ENCODE measurements at regions of chr15 and their contacts with region 1.

Region 1: GRCh38 chr15:71443538-71443937 is 328.3 kb downstream of the THSD4 start:
- DNase-seq: no peak
- H3K4me3 ChIP-seq: no peak overlapping the region
- H3K27ac ChIP-seq: peak overlapping the region; percentile 7 to 23 (median 10)
- H3K4me1 ChIP-seq: peaks cover 18 to 68% (median 44%) of the 10 kb centered on the region in 3 donors
- H3K27me3 ChIP-seq: no peaks in the 10 kb centered on the region
- CTCF ChIP-seq: peak; percentile 82 to 96 (median 90)
- POLR2A ChIP-seq: no peak

Region 2: GRCh38 chr15:71114896-71115554 is 328.5 kb before region 1 on chr15 and contains the start of gene THSD4:
- intact Hi-C with region 1: loop called (anchors 5 kb)
- DNase-seq: no peak
- H3K4me3 ChIP-seq: peak within 1 kb of the TSS; percentile 52 to 72 (median 62)
- H3K27ac ChIP-seq: peak within 1 kb of the TSS; percentile 78 to 86 (median 80)
- H3K4me1 ChIP-seq: peaks cover 0 to 45% (median 8%) of the 10 kb centered on the region in 3 donors
- H3K27me3 ChIP-seq: peaks cover 0 to 18% (median 0%) of the 10 kb centered on the region in 4 donors
- CTCF ChIP-seq: peak; percentile 49 to 98 (median 96)
- POLR2A ChIP-seq: peak in 1 of 4 donors; percentile 13
- total RNA-seq, gene THSD4: 39.4 to 232 (median 127) TPM

Region 3: DNA sequence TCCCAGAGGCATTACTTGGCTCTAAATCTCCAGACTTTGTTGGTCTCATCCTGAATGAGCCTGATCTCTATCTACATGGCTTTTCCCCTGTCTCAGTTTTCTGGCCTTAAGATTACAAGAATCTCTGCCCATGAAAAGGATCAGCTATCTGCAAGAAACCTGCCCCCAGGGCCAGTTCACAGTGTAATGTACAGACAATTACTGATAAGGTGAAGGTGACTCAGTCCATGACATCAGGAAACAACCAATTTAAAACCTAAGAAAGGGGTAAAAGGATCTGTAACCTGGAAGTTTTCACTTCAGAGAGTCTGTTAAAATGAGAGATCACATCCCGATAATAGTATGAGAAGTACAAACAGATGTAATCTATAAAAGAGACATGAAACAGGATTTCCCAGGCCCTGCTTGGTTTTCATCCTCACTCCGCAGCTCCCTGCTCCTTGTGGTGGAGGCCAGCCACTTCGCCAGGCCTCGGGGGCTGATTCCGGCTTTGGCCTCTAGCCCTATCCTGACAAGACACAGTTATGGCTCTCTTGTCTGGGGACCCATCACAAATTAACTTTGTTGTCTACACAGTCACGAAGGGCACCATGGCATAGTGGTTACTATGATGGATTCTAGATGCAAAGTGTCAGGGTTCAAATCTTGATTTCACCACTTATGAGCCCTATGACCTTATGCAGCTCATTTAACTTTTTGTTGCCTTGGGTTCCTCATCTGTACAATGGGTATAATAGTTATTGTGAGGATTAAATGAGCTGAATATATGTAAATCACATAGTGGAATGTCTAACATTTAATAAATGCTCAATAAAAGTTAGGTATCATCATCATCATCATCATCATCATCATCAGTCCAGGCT is 191.3 kb before region 1 on chr15:
- intact Hi-C with region 1: no loop called
- DNase-seq: no peak
- H3K4me3 ChIP-seq: no peak overlapping the region
- H3K27ac ChIP-seq: no peak overlapping the region
- H3K4me1 ChIP-seq: no peaks in the 10 kb centered on the region
- H3K27me3 ChIP-seq: no peaks in the 10 kb centered on the region
- CTCF ChIP-seq: no peak
- POLR2A ChIP-seq: no peak

Region 4: DNA sequence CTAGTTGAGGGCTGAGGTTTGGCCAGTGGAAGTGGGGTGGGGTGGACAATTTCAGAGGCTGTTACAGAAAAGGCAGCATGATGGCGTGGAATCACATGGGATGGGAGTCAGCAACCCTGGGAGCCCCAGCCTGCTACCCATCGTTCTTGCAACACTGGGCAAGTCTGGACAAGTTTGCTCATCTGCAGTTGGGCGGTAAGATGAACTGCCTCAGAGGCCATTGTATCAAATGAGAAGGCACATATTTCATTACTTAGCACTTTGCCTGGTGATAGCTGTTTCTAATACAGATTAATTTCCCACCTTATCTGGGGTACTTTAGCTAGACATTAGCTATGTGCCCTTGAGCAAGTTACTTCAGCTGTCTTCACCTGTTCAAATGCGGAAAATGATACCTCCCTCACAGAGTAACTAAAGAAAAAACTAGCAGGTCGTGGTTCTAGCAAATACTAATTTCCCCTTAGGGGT is 79.4 kb before region 1 on chr15:
- intact Hi-C with region 1: no loop called
- DNase-seq: no peak
- H3K4me3 ChIP-seq: no peak overlapping the region
- H3K27ac ChIP-seq: peak overlapping the region in 1 of 4 donors; percentile 11
- H3K4me1 ChIP-seq: peaks cover 0 to 9% (median 0%) of the 10 kb centered on the region in 3 donors
- H3K27me3 ChIP-seq: no peaks in the 10 kb centered on the region
- CTCF ChIP-seq: no peak
- POLR2A ChIP-seq: no peak

Measured in esophagus squamous epithelium (tissue), 5 donors.